ENCODE measurements at regions of chr15 and their contacts with region 1.

Region 1: GRCh38 chr15:45457641-45458433 is 64.7 kb downstream of the SLC30A4 start:
- DNase-seq: peak; percentile 62 to 82
- H3K4me3 ChIP-seq: peak overlapping the region; percentile 27
- H3K4me3 Mint-ChIP-seq: peak overlapping the region; percentile 65
- H3K27ac Mint-ChIP-seq: peak overlapping the region; percentile 69
- H3K4me1 ChIP-seq: peaks cover 15% of the 10 kb centered on the region
- H3K4me1 Mint-ChIP-seq: peaks cover 10% of the 10 kb centered on the region
- H3K27me3 ChIP-seq: no peaks in the 10 kb centered on the region
- H3K27me3 Mint-ChIP-seq: no peaks in the 10 kb centered on the region
- CTCF ChIP-seq: peak; percentile 66 to 75

Region 2: GRCh38 chr15:45166834-45167630 is 290.8 kb before region 1 on chr15:
- CTCF ChIA-PET with region 1: interaction called, 6 read pairs
- POLR2A ChIA-PET with region 1: no interaction called
- intact Hi-C with region 1: loop called (anchors 1 kb)
- DNase-seq: peak; percentile 88 to 89
- H3K4me3 ChIP-seq: peak overlapping the region; percentile 52
- H3K4me3 Mint-ChIP-seq: peak overlapping the region; percentile 71
- H3K27ac Mint-ChIP-seq: peak overlapping the region; percentile 69
- H3K4me1 ChIP-seq: peaks cover 32% of the 10 kb centered on the region
- H3K4me1 Mint-ChIP-seq: peaks cover 17% of the 10 kb centered on the region
- H3K27me3 ChIP-seq: no peaks in the 10 kb centered on the region
- H3K27me3 Mint-ChIP-seq: no peaks in the 10 kb centered on the region
- CTCF ChIP-seq: peak; percentile 46 to 80

Region 3: GRCh38 chr15:45205192-45205591 is 252.6 kb before region 1 on chr15:
- CTCF ChIA-PET with region 1: no interaction called
- POLR2A ChIA-PET with region 1: no interaction called
- intact Hi-C with region 1: loop called (anchors 1 kb)
- DNase-seq: peak; percentile 75 to 80
- H3K4me3 ChIP-seq: no peak overlapping the region
- H3K4me3 Mint-ChIP-seq: no peak overlapping the region
- H3K27ac Mint-ChIP-seq: no peak overlapping the region
- H3K4me1 ChIP-seq: 0 out of 2 replicates have a peak, but pooled peaks cover 5% of the 10 kb centered on the region
- H3K4me1 Mint-ChIP-seq: no peaks in the 10 kb centered on the region
- H3K27me3 ChIP-seq: no peaks in the 10 kb centered on the region
- H3K27me3 Mint-ChIP-seq: no peaks in the 10 kb centered on the region
- CTCF ChIP-seq: peak; percentile 78 to 83

Region 4: DNA sequence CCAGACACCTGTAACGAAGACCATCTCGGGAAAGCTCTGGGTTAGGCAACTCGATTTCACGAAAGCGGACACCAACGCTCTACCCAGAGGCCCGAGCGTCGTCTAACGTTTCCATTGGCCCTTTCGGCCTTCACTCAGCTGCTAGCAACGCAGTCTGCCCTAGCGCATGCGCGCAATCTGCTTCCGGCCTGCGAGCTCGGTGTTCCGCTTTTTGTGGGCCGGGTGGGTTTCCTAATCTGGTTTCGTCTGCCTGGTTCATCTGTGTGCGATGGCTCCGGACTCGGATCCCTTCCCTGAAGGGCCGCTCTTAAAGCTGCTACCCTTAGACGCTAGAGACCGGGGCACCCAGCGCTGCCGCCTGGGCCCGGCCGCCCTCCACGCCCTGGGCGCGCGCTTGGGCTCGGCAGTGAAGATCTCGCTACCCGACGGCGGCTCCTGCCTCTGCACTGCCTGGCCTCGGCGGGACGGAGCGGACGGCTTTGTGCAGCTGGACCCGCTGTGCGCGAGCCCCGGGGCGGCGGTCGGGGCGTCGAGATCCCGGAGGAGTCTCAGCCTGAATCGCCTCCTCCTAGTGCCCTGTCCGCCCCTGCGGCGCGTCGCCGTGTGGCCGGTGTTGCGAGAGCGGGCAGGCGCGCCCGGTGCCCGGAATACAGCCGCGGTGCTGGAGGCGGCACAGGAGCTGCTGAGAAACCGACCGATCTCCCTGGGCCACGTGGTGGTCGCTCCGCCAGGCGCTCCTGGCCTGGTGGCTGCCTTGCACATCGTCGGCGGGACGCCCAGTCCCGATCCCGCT is 55.5 kb before region 1 on chr15:
- CTCF ChIA-PET with region 1: no interaction called
- POLR2A ChIA-PET with region 1: no interaction called
- intact Hi-C with region 1: loop called (anchors 2 kb)
- DNase-seq: peak; percentile 97 to 98
- H3K4me3 ChIP-seq: peak overlapping the region; percentile 98
- H3K4me3 Mint-ChIP-seq: peak overlapping the region; percentile 93
- H3K27ac Mint-ChIP-seq: peak overlapping the region; percentile 86
- H3K4me1 ChIP-seq: no peaks in the 10 kb centered on the region; the same call in 1 of the 2 replicates
- H3K4me1 Mint-ChIP-seq: peaks cover 6% of the 10 kb centered on the region
- H3K27me3 ChIP-seq: no peaks in the 10 kb centered on the region
- H3K27me3 Mint-ChIP-seq: no peaks in the 10 kb centered on the region
- CTCF ChIP-seq: no peak

Region 5: DNA sequence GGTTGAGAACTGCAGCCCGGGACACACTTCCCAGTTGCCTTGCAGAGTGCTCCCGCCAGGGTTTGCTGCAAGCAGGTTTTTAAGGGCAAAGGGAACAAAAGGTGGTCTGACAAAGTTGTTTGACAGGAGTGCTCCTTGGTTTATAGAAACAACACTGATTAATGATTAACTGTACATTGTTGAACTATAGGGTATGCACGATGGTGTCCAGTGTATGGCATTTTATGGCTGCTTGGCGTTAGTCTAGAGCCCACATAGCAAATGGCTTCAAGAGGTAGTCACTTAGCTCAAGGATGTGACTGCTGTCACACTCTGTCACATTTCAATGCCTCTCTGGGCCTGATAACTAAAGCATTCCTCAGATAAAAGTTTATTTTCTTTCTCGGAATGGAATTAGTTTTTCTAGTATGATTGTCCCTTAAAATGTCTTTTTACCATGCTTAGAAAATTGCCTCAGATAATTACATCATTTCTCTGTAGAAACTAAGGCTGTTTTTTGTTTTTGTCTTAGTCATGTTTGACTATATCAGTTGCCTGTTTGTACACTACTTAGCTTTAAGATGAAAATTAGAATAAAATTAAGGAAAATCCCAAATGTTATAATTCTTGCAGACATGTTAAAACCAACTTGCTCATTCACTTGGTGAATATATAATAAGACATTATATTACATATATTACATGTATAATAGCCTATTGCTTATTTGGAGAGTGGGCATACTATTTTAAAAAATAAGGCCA is 18.1 kb before region 1 on chr15:
- CTCF ChIA-PET with region 1: interaction called, 5 read pairs
- POLR2A ChIA-PET with region 1: no interaction called
- intact Hi-C with region 1: loop called (anchors 1 kb)
- DNase-seq: peak; percentile 68 to 70
- H3K4me3 ChIP-seq: no peak overlapping the region
- H3K4me3 Mint-ChIP-seq: no peak overlapping the region
- H3K27ac Mint-ChIP-seq: peak overlapping the region; percentile 42
- H3K4me1 ChIP-seq: peaks cover 14% of the 10 kb centered on the region
- H3K4me1 Mint-ChIP-seq: peaks cover 2% of the 10 kb centered on the region
- H3K27me3 ChIP-seq: no peaks in the 10 kb centered on the region
- H3K27me3 Mint-ChIP-seq: no peaks in the 10 kb centered on the region
- CTCF ChIP-seq: peak in 1 of 2 experiments; percentile 37

Region 6: GRCh38 chr15:45522328-45523160 is 64.7 kb after region 1 on chr15 and contains the start of gene SLC30A4:
- CTCF ChIA-PET with region 1: no interaction called
- POLR2A ChIA-PET with region 1: interaction called, 3 read pairs
- intact Hi-C with region 1: loop called (anchors 2 kb)
- DNase-seq: peak; percentile 64 to 70
- H3K4me3 ChIP-seq: peak within 1 kb of the TSS; percentile 71
- H3K4me3 Mint-ChIP-seq: peak within 1 kb of the TSS; percentile 84
- H3K27ac Mint-ChIP-seq: no peak within 1 kb of the TSS
- H3K4me1 ChIP-seq: peaks cover 6% of the 10 kb centered on the region; the same call in 1 of the 2 replicates
- H3K4me1 Mint-ChIP-seq: peaks cover 19% of the 10 kb centered on the region
- H3K27me3 ChIP-seq: no peaks in the 10 kb centered on the region
- H3K27me3 Mint-ChIP-seq: peaks cover 4% of the 10 kb centered on the region
- CTCF ChIP-seq: peak; percentile 26 to 37
- total RNA-seq, gene SLC30A4: 0.61 and 1.2 TPM in 2 replicates

Region 7: GRCh38 chr15:45611305-45611704 is 153.5 kb after region 1 on chr15:
- CTCF ChIA-PET with region 1: interaction called, 4 read pairs
- POLR2A ChIA-PET with region 1: no interaction called
- intact Hi-C with region 1: loop called (anchors 1 kb)
- DNase-seq: peak in 1 of 2 experiments; percentile 30
- H3K4me3 ChIP-seq: no peak overlapping the region
- H3K4me3 Mint-ChIP-seq: no peak overlapping the region
- H3K27ac Mint-ChIP-seq: no peak overlapping the region
- H3K4me1 ChIP-seq: no peaks in the 10 kb centered on the region
- H3K4me1 Mint-ChIP-seq: no peaks in the 10 kb centered on the region
- H3K27me3 ChIP-seq: no peaks in the 10 kb centered on the region
- H3K27me3 Mint-ChIP-seq: no peaks in the 10 kb centered on the region
- CTCF ChIP-seq: peak; percentile 41 to 62

Measured in Caco-2 (cell line).